ENCODE measurements at regions of chrX and their contacts with region 1.

Region 1: GRCh38 chrX:154397819-154398724 is at the start of gene RPL10:
- DNase-seq: peak; percentile 75 to 96 (median 88)
- H3K4me3 ChIP-seq: peak within 1 kb of the TSS; percentile 89
- H3K4me3 Mint-ChIP-seq: peak within 1 kb of the TSS; percentile 90 to 99 (median 97)
- H3K27ac ChIP-seq: peak within 1 kb of the TSS; percentile 98
- H3K27ac Mint-ChIP-seq: peak within 1 kb of the TSS; percentile 92 to 100 (median 99)
- H3K4me1 ChIP-seq: peaks cover 14% of the 10 kb centered on the region
- H3K4me1 Mint-ChIP-seq: peaks cover 19 to 33% (median 23%) of the 10 kb centered on the region in 3 donors
- H3K27me3 ChIP-seq: no peaks in the 10 kb centered on the region
- H3K27me3 Mint-ChIP-seq: peaks cover 0 to 15% of the 10 kb centered on the region in 2 donors
- total RNA-seq, gene RPL10: 3,198 to 3,218 TPM

Region 2: GRCh38 chrX:154370882-154371770 is 26.9 kb before region 1 on chrX:
- CTCF ChIA-PET with region 1: interaction called, 8 read pairs
- POLR2A ChIA-PET with region 1: interaction called, 12 read pairs
- DNase-seq: peak; percentile 85 to 96 (median 89)
- H3K4me3 ChIP-seq: peak overlapping the region; percentile 94
- H3K4me3 Mint-ChIP-seq: peak overlapping the region; percentile 82 to 97 (median 86)
- H3K27ac ChIP-seq: peak overlapping the region; percentile 99
- H3K27ac Mint-ChIP-seq: peak overlapping the region; percentile 73 to 100 (median 82)
- H3K4me1 ChIP-seq: peaks cover 48% of the 10 kb centered on the region
- H3K4me1 Mint-ChIP-seq: peaks cover 34 to 39% (median 36%) of the 10 kb centered on the region in 3 donors
- H3K27me3 ChIP-seq: no peaks in the 10 kb centered on the region
- H3K27me3 Mint-ChIP-seq: peaks cover 0 to 8% of the 10 kb centered on the region in 2 donors

Region 3: GRCh38 chrX:154411322-154411980 is 13.4 kb after region 1 on chrX and contains the start of gene TAFAZZIN:
- CTCF ChIA-PET with region 1: interaction called, 12 read pairs
- POLR2A ChIA-PET with region 1: interaction called, 12 read pairs
- DNase-seq: peak; percentile 59 to 83 (median 70)
- H3K4me3 ChIP-seq: peak within 1 kb of the TSS; percentile 59
- H3K4me3 Mint-ChIP-seq: peak within 1 kb of the TSS; percentile 85 to 98 (median 89)
- H3K27ac ChIP-seq: peak within 1 kb of the TSS; percentile 59
- H3K27ac Mint-ChIP-seq: peak within 1 kb of the TSS; percentile 80 to 99 (median 92)
- H3K4me1 ChIP-seq: peaks cover 9% of the 10 kb centered on the region
- H3K4me1 Mint-ChIP-seq: peaks cover 7 to 23% (median 10%) of the 10 kb centered on the region in 3 donors
- H3K27me3 ChIP-seq: no peaks in the 10 kb centered on the region
- H3K27me3 Mint-ChIP-seq: peaks cover 0 to 5% of the 10 kb centered on the region in 2 donors
- total RNA-seq, gene TAFAZZIN: 51.9 to 52.3 TPM

Region 4: GRCh38 chrX:154428176-154429010 is 30.3 kb after region 1 on chrX and contains the start of gene ATP6AP1:
- CTCF ChIA-PET with region 1: interaction called, 5 read pairs
- POLR2A ChIA-PET with region 1: interaction called, 14 read pairs
- DNase-seq: peak; percentile 77 to 93 (median 87)
- H3K4me3 ChIP-seq: peak within 1 kb of the TSS; percentile 59
- H3K4me3 Mint-ChIP-seq: peak within 1 kb of the TSS; percentile 74 to 92 (median 83)
- H3K27ac ChIP-seq: peak within 1 kb of the TSS; percentile 61
- H3K27ac Mint-ChIP-seq: peak within 1 kb of the TSS; percentile 65 to 93 (median 87)
- H3K4me1 ChIP-seq: peaks cover 14% of the 10 kb centered on the region
- H3K4me1 Mint-ChIP-seq: peaks cover 21 to 26% (median 21%) of the 10 kb centered on the region in 3 donors
- H3K27me3 ChIP-seq: no peaks in the 10 kb centered on the region
- H3K27me3 Mint-ChIP-seq: peaks cover 0 to 2% of the 10 kb centered on the region in 2 donors
- total RNA-seq, gene ATP6AP1: 43.0 to 43.2 TPM

Region 5: GRCh38 chrX:154490414-154491083 is 92.5 kb after region 1 on chrX and contains the start of gene SLC10A3:
- CTCF ChIA-PET with region 1: interaction called, 10 read pairs
- POLR2A ChIA-PET with region 1: interaction called, 20 read pairs
- DNase-seq: peak; percentile 84 to 92 (median 87)
- H3K4me3 ChIP-seq: peak within 1 kb of the TSS; percentile 66
- H3K4me3 Mint-ChIP-seq: peak within 1 kb of the TSS; percentile 86 to 94 (median 91)
- H3K27ac ChIP-seq: peak within 1 kb of the TSS; percentile 81
- H3K27ac Mint-ChIP-seq: peak within 1 kb of the TSS; percentile 88 to 96 (median 94)
- H3K4me1 ChIP-seq: peaks cover 10% of the 10 kb centered on the region
- H3K4me1 Mint-ChIP-seq: peaks cover 12 to 31% (median 14%) of the 10 kb centered on the region in 3 donors
- H3K27me3 ChIP-seq: no peaks in the 10 kb centered on the region
- H3K27me3 Mint-ChIP-seq: no peaks in the 10 kb centered on the region
- total RNA-seq, gene SLC10A3: 40.8 to 45.7 TPM